AG04449 (cell line): ENCODE measurements at regions of chr3 and their contacts with region 1.

Region 1: DNA sequence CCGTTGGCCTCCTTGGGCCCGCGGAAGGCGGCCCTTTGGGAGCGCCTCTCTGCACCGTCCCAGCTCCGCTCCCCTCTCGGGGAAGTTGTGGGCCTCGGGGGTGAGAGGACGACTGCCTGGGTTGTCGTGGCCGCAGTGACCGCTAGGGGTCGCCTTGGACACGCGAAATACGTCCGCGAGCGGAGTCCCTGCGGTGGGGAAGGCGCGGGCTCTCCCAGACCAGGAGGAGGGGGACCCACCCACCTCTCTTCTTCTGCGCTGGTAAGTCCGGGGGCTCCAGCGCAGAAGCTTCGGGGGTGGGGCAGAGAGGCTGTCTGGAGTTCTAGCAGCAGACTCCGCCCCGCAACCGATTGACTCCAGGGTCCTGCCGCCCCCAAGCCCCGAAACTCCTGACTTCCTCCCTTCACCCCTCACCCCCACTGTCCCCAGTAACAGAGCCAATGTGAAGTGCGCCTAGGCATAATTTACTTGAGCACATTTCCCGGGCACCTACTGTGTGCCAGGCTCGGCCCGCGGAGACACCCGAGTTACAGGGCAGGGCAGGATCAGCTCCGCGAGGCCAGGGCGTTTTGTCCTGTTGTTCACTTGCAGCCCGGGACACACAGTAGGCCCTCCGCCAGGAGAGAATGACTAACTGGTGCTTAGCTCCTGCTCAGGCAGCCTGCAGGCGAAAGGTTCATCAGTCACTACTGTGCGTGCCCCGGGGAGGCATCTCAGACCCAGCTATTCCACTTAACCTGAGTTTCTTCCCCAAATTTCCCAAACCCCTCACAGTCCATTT is 32.8 kb downstream of the DNASE1L3 start:
- DNase-seq: no peak
- H3K4me3 ChIP-seq: peak overlapping the region; percentile 52
- CTCF ChIP-seq: peak; percentile 96

Region 2: DNA sequence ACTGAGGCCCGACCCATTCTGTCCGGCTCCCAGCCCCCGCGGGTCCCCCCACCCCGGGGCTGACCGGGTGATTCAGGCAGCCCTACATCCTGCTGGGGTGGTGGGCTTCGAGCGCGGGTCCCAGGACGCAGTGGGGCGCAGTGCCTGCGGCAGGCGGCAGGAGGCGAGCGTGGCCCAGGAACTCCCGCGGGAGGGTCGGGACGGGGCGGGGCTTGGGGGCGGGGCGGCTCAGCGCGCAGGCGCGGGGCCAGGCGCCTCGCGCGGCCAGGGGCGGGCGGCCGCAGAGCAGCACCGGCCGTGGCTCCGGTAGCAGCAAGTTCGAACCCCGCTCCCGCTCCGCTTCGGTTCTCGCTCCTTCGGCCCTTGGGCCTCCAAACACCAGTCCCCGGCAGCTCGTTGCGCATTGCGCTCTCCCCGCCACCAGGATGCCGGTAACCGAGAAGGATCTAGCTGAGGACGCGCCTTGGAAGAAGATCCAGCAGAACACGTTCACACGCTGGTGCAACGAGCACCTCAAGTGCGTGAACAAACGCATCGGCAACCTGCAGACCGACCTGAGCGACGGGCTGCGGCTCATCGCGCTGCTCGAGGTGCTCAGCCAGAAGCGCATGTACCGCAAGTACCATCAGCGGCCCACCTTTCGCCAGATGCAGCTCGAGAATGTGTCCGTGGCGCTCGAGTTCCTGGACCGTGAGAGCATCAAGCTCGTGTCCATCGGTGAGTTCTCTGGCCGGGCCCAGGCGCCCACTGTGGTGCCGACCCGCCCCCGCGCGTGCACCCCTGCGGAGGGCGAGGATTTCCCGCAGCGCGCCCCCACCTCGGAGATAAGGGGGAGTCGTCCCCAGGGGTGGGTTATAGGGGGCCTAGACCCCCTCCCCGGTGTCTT is 169.6 kb before region 1 on chr3 and contains the start of gene FLNB:
- CTCF ChIA-PET with region 1: interaction called, 13 read pairs
- POLR2A ChIA-PET with region 1: no interaction called
- DNase-seq: no peak
- H3K4me3 ChIP-seq: peak within 1 kb of the TSS; percentile 100
- CTCF ChIP-seq: peak; percentile 92

Region 3: GRCh38 chr3:58021072-58021959 is 156.6 kb before region 1 on chr3:
- CTCF ChIA-PET with region 1: no interaction called
- POLR2A ChIA-PET with region 1: no interaction called
- DNase-seq: no peak
- H3K4me3 ChIP-seq: no peak overlapping the region
- CTCF ChIP-seq: no peak

Region 4: DNA sequence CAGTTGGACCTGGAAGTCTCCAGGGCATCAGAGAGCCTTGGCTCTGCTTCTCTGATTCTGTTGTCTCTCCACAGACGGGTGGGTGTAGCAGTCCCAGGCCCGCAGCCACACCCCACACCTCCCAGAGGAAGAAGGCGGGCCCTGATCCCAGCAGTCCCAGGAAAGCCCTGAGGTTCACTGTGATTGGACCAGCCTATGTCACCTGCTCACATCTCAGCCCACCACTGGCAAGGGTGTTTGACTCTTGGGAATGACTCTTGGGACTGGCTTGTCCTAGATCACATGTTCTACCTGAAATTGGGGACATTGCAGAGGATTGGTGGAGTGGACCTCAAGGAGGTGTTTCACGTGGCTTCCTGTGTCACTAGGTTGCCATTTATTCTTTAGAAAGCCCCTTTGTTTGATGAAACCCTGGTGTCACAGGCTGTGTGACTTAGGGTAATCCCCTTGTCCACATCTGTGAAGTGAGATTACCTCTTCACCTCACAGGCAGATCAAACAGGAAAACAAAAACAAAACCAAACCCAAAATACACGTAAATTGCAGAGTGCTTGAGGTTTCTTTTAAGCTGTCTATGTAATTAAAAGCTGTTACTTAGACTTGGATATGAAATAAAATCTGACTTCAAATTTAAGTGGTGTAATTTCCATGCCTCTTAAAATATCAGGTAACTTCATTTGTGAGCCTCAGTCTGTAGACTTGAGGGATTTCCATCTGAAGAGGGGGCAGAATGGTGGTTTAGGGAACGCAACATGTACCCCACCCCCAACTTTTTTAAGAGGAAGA is 143.0 kb before region 1 on chr3:
- CTCF ChIA-PET with region 1: no interaction called
- POLR2A ChIA-PET with region 1: no interaction called
- DNase-seq: no peak
- H3K4me3 ChIP-seq: no peak overlapping the region
- CTCF ChIP-seq: no peak

Region 5: DNA sequence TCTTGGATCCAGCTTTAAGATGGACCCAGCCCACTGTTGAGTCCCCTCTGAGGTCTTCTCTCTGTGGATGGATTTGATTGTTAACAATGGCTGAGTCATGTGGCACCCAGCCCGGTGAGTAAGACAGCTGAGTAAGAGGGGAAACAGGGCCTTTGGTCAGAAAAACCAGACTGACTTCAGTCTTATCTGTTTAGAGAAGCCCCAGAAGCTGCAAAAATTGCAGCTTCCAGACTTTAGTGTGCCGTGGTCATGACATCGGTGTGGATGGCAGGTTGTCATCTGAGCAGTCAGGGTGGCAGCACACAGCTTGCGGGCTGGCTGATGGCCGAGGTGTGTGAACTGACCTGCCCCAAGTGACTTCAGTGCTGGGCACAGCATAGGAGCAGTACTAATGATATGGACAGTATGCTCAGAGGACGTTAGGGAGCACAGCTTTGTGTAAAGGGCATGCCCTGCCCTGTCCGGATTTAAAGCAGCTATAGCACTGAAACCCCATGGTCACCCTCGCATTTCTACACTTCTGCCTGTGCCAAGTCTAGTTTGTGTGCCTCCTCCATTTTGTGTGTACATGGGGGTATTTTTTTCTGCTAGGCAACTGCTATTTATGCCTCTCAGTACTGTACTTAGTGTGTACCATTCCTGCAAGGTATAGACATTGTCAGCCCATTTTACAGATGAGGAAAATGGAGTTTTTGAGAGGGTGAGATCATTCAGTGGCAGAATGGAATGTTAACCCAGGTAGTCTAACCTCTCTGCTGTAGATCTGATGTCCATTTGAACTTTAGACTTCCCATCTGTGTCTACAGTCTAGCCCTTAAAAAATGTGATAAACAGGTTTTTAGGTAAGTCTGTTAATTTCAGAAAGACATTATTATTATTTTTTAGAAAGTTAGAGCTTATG is 125.3 kb before region 1 on chr3:
- CTCF ChIA-PET with region 1: no interaction called
- POLR2A ChIA-PET with region 1: no interaction called
- DNase-seq: no peak
- H3K4me3 ChIP-seq: no peak overlapping the region; the same call in 1 of the 2 replicates
- CTCF ChIP-seq: no peak

Region 6: GRCh38 chr3:58167431-58168351 is 10.2 kb before region 1 on chr3:
- CTCF ChIA-PET with region 1: interaction called, 116 read pairs
- POLR2A ChIA-PET with region 1: no interaction called
- DNase-seq: no peak
- H3K4me3 ChIP-seq: no peak overlapping the region
- CTCF ChIP-seq: peak; percentile 90

Region 7: GRCh38 chr3:58217209-58217811 is 39.4 kb after region 1 on chr3:
- CTCF ChIA-PET with region 1: interaction called, 196 read pairs
- POLR2A ChIA-PET with region 1: interaction called, 3 read pairs
- DNase-seq: no peak
- H3K4me3 ChIP-seq: no peak overlapping the region
- CTCF ChIP-seq: peak; percentile 76

Region 8: GRCh38 chr3:58249358-58250092 is 71.6 kb after region 1 on chr3:
- CTCF ChIA-PET with region 1: interaction called, 10 read pairs
- POLR2A ChIA-PET with region 1: no interaction called
- DNase-seq: no peak
- H3K4me3 ChIP-seq: no peak overlapping the region
- CTCF ChIP-seq: no peak

Region 9: DNA sequence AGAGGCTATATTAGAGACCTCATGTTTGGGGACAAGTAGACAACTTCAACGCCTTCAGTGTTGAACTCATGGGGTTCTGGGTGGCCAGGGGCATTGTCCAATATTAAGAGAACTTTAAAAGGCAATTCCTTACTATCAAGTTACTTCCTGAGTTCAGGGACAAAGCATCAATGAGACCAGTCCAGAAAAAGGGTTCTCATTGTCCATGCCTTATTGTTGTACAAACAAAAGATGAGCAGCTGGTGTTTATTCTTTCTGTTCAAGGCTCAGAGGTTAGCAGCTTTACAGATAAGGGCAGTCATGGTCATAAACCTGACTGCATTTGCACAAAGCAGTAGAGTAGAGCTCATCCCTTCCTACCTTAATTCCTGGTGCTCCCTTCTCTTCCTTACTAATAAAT is 274.2 kb after region 1 on chr3:
- CTCF ChIA-PET with region 1: no interaction called
- POLR2A ChIA-PET with region 1: no interaction called
- DNase-seq: no peak
- H3K4me3 ChIP-seq: no peak overlapping the region
- CTCF ChIP-seq: no peak